CD14-positive monocyte (primary cell): ENCODE measurements at regions of chr1 and their contacts with region 1.

Region 1: GRCh38 chr1:21294266-21294989 is 4.2 kb upstream of the ECE1 start:
- DNase-seq: peak; percentile 96 to 100 (median 97)
- H3K4me3 ChIP-seq: peak overlapping the region in 1 of 3 experiments; percentile 39
- H3K4me3 Mint-ChIP-seq: peak overlapping the region; percentile 74 to 85
- H3K27ac ChIP-seq: peak overlapping the region; percentile 93 to 99
- H3K27ac Mint-ChIP-seq: peak overlapping the region; percentile 96 to 100 (median 99)
- H3K4me1 ChIP-seq: peaks cover 55 to 69% of the 10 kb centered on the region in 2 donors
- H3K4me1 Mint-ChIP-seq: peaks cover 69% of the 10 kb centered on the region
- H3K27me3 ChIP-seq: peaks cover 0 to 19% of the 10 kb centered on the region in 2 donors
- H3K27me3 Mint-ChIP-seq: peaks cover 16 to 49% (median 48%) of the 10 kb centered on the region in 3 donors
- CTCF ChIP-seq: no peak

Region 2: GRCh38 chr1:21255278-21255942 is 39.0 kb before region 1 on chr1:
- intact Hi-C with region 1: loop called in 1 of 2 experiments (anchors 2 kb)
- DNase-seq: peak; percentile 83 to 89 (median 84)
- H3K4me3 ChIP-seq: no peak overlapping the region
- H3K4me3 Mint-ChIP-seq: peak overlapping the region in 1 of 2 donors; percentile 48
- H3K27ac ChIP-seq: no peak overlapping the region
- H3K27ac Mint-ChIP-seq: peak overlapping the region; percentile 36 to 80 (median 66)
- H3K4me1 ChIP-seq: peaks cover 0 to under 1% of the 10 kb centered on the region in 2 donors
- H3K4me1 Mint-ChIP-seq: peaks cover 10% of the 10 kb centered on the region
- H3K27me3 ChIP-seq: peaks cover 0 to 18% of the 10 kb centered on the region in 2 donors
- H3K27me3 Mint-ChIP-seq: peaks cover 19 to 66% (median 42%) of the 10 kb centered on the region in 3 donors
- CTCF ChIP-seq: peak; percentile 85

Region 3: DNA sequence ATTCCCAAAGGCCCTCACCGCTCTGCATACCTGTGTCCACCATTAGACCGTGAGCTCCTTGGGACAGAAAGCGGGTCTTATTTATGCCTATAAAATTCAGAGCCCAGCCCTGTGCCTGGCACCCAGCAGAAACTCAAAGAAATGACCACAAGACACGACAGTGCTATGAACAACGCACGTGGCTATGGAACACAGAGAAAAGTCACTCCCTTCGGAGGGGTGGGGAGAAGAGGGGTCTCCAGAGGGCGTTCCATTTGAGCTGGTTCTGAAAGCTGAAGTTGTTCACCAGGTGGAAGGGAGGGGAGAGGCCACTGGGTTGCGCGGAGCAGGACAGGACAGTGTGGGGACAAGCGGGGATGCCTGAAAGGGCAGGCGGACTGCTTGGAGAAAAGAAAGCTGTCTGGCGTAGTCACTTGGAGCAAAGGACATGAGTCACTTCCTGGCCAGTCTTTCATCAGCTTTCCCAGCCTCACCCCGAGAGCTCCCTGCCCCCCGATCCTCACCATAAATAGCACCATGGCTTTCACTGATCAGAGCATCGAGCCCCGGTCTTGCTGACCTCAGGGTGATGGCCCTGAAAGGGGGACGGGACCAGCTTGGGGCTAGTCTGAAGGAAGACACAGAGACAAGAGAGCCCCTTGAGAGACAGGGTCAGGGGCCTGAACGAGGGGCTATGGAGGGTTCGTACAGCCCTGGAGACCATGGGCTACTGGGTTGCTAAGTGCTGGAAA is 32.7 kb before region 1 on chr1:
- intact Hi-C with region 1: loop called in 1 of 2 experiments (anchors 2 kb)
- DNase-seq: peak; percentile 91 to 95 (median 94)
- H3K4me3 ChIP-seq: peak overlapping the region in 2 of 3 experiments; percentile 12 to 61
- H3K4me3 Mint-ChIP-seq: peak overlapping the region; percentile 83 to 92
- H3K27ac ChIP-seq: peak overlapping the region; percentile 51 to 89
- H3K27ac Mint-ChIP-seq: peak overlapping the region; percentile 92 to 99 (median 98)
- H3K4me1 ChIP-seq: peaks cover 24 to 27% of the 10 kb centered on the region in 2 donors
- H3K4me1 Mint-ChIP-seq: peaks cover 30% of the 10 kb centered on the region
- H3K27me3 ChIP-seq: peaks cover 0 to 14% of the 10 kb centered on the region in 2 donors
- H3K27me3 Mint-ChIP-seq: peaks cover 26 to 64% (median 57%) of the 10 kb centered on the region in 3 donors
- CTCF ChIP-seq: no peak

Region 4: DNA sequence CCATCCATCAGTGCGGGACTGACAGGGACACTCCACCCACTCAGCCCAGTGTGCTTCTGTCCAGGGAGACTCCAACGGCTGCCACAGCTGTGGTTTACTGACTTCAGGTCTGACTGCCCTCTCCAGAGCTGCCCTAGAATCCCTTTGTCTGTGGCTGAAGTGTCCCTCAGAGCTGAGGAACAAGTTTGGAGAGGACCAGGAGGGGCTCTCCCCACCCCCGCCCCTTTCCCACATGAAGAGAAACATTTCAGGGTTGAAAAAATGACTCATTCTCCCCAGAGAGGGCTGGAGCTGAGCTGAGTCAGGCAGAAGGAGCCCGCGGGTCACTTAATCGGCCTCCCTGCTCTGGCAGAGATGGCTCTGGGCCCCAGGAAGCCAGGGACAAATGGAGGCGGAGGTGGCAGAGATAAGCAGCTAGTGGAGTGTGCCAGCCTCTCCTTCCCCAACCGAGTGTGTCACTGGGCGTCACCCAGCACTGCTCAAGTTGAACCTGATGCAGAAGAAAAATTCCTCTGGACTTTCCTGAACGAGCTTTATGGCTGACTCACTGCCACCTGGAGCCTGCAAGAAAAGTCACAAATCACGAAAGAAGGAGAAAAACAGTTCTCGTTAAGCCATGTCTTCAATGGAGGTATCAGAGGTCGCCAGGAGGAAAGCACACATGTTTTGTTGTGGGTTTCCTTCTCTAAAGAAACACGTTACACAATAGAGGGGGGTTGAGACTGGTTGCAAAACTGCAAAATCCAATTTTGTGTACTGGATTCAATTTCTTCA is 30.1 kb after region 1 on chr1:
- intact Hi-C with region 1: loop called in 1 of 2 experiments (anchors 2 kb)
- DNase-seq: peak; percentile 86 to 98 (median 89)
- H3K4me3 ChIP-seq: peak overlapping the region in 1 of 3 experiments; percentile 51
- H3K4me3 Mint-ChIP-seq: peak overlapping the region; percentile 73 to 85
- H3K27ac ChIP-seq: peak overlapping the region; percentile 91 to 97
- H3K27ac Mint-ChIP-seq: peak overlapping the region; percentile 98 to 100 (median 99)
- H3K4me1 ChIP-seq: peaks cover 54 to 55% of the 10 kb centered on the region in 2 donors
- H3K4me1 Mint-ChIP-seq: peaks cover 59% of the 10 kb centered on the region
- H3K27me3 ChIP-seq: peaks cover 2 to 7% of the 10 kb centered on the region in 2 donors
- H3K27me3 Mint-ChIP-seq: peaks cover 7 to 37% (median 31%) of the 10 kb centered on the region in 3 donors
- CTCF ChIP-seq: no peak

Region 5: GRCh38 chr1:21334214-21335087 is 40.0 kb after region 1 on chr1:
- intact Hi-C with region 1: loop called (anchors 2 kb)
- DNase-seq: peak; percentile 97 to 99 (median 99)
- H3K4me3 ChIP-seq: peak overlapping the region; percentile 5 to 70 (median 35)
- H3K4me3 Mint-ChIP-seq: peak overlapping the region; percentile 84 to 88
- H3K27ac ChIP-seq: peak overlapping the region; percentile 88 to 90
- H3K27ac Mint-ChIP-seq: peak overlapping the region; percentile 96 to 100 (median 99)
- H3K4me1 ChIP-seq: peaks cover 77 to 82% of the 10 kb centered on the region in 2 donors
- H3K4me1 Mint-ChIP-seq: peaks cover 87% of the 10 kb centered on the region
- H3K27me3 ChIP-seq: peaks cover 0 to 20% of the 10 kb centered on the region in 2 donors
- H3K27me3 Mint-ChIP-seq: peaks cover 10 to 52% (median 50%) of the 10 kb centered on the region in 3 donors
- CTCF ChIP-seq: peak; percentile 85